B cell (primary cell): ENCODE measurements at regions of chr12 and their contacts with region 1.

Region 1: GRCh38 chr12:26298785-26299621 is 103.6 kb downstream of the SSPN start:
- DNase-seq: peak; percentile 75
- ATAC-seq: peak; percentile 96
- H3K4me3 ChIP-seq: peak overlapping the region in 4 of 5 experiments; percentile 30 to 42 (median 36)
- H3K4me3 Mint-ChIP-seq: peak overlapping the region; percentile 72
- H3K27ac ChIP-seq: peak overlapping the region; percentile 17 to 67
- H3K27ac Mint-ChIP-seq: peak overlapping the region; percentile 64
- H3K4me1 ChIP-seq: peaks cover 17 to 23% of the 10 kb centered on the region in 2 donors
- H3K4me1 Mint-ChIP-seq: peaks cover 26% of the 10 kb centered on the region
- H3K27me3 ChIP-seq: no peaks in the 10 kb centered on the region
- H3K27me3 Mint-ChIP-seq: no peaks in the 10 kb centered on the region
- CTCF ChIP-seq: no peak

Region 2: DNA sequence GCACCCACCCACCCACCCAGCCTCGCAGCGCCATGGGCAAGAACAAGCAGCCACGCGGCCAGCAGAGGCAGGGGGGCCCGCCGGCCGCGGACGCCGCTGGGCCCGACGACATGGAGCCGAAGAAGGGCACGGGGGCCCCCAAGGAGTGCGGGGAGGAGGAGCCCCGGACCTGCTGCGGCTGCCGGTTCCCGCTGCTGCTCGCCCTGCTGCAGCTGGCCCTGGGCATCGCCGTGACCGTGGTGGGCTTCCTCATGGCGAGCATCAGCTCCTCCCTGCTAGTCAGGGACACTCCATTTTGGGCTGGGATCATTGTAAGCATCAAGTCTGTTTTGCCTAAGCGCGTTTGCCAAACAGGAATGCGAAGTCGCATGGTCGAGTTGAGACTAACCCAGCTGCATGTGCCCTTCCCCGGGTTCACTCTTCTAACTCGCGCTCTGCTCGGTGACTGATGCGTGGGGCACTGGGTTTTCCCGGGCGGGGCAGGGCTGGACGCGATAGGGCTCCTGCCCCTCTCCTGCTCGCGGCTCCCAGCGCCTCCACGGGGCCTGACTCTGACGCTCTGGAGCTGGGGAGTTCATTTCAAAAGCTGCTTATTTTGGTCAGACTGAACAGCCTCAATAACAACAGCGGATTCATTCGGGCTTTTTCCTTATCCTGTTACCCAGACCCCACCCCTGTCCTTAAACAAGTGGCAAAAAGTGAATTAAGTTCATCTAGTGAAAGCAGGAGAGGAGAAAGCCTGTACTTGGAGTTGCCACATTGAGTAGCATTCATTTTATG is 103.2 kb before region 1 on chr12:
- CTCF ChIA-PET with region 1: interaction called, 3 read pairs
- POLR2A ChIA-PET with region 1: no interaction called
- intact Hi-C with region 1: loop called (anchors 10 kb)
- DNase-seq: peak; percentile 54
- ATAC-seq: peak; percentile 77
- H3K4me3 ChIP-seq: peak overlapping the region; percentile 44 to 74 (median 64)
- H3K4me3 Mint-ChIP-seq: peak overlapping the region; percentile 98
- H3K27ac ChIP-seq: peak overlapping the region in 1 of 2 donors; percentile 7
- H3K27ac Mint-ChIP-seq: peak overlapping the region; percentile 97
- H3K4me1 ChIP-seq: peaks cover 6 to 15% of the 10 kb centered on the region in 2 donors
- H3K4me1 Mint-ChIP-seq: peaks cover 16% of the 10 kb centered on the region
- H3K27me3 ChIP-seq: peaks cover 0 to 5% (median 0%) of the 10 kb centered on the region in 4 experiments
- H3K27me3 Mint-ChIP-seq: peaks cover 4% of the 10 kb centered on the region
- CTCF ChIP-seq: no peak

Region 3: DNA sequence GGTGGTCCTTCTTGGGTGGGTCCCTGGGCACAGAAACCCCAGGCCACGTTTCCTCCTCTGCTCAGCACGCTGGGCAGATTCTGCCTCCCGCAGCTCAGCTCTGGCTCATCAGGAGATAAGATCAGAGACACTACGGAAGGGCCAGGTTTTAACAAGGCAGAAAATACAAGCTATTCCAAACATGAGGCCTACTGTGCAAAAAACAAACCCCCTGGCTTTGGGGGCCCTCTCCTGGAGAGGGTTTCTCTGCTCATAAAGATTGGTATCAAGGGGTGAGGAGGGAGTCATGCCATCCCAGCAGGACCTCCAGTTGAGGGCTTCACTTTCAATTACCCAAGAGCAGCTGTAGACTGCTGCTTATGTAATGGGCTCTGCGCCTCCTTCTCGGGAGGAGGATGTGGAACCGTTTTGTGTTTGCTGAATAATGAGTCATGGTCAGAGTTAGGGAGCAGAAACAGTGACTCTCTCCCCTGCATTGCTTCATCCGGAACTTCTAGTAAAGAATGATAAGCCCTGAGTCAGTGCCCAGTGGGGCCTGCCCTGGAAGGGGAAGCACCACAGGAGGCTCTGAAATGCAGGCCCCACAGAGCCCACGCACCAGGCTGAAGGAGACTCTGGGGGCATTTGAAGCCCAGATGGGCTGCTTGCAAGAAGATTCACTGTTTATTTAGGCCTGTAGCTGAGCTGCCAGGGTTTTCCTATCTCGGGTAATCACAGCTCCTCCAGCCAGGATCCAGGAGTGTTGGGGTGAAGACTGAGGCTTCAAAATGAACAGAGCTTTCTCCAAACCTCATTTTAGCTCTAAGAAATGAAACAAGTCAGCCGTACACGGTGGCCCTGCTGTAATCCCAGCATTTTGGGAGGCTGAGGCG is 24.3 kb before region 1 on chr12:
- CTCF ChIA-PET with region 1: no interaction called
- POLR2A ChIA-PET with region 1: no interaction called
- intact Hi-C with region 1: loop called (anchors 1 kb)
- DNase-seq: peak; percentile 58
- ATAC-seq: peak; percentile 96
- H3K4me3 ChIP-seq: no peak overlapping the region
- H3K4me3 Mint-ChIP-seq: peak overlapping the region; percentile 18
- H3K27ac ChIP-seq: no peak overlapping the region
- H3K27ac Mint-ChIP-seq: peak overlapping the region; percentile 78
- H3K4me1 ChIP-seq: peaks cover 16 to 28% of the 10 kb centered on the region in 2 donors
- H3K4me1 Mint-ChIP-seq: peaks cover 43% of the 10 kb centered on the region
- H3K27me3 ChIP-seq: no peaks in the 10 kb centered on the region
- H3K27me3 Mint-ChIP-seq: no peaks in the 10 kb centered on the region
- CTCF ChIP-seq: no peak

Region 4: DNA sequence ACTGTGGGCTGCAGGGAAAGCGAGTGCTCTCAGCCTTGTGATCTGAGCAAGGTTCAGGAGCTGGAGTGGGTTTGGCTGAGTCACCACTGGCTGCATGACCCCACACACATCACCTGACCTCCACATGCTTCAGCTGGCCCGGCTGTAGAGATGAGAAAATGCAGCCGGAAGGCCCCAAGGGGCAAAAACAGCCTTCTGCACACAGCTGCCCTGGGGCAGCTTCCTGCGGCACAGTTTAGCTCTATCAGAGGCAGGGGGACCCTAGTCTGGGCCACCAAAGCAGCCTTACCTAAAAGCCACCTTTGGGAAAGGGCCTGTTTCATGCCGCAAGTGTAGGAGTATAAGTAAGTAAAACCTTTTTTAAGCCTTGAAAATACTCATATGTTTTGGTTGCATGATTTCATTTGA is 19.7 kb after region 1 on chr12:
- CTCF ChIA-PET with region 1: interaction called, 3 read pairs
- POLR2A ChIA-PET with region 1: interaction called, 5 read pairs
- intact Hi-C with region 1: loop called (anchors 2 kb)
- DNase-seq: peak; percentile 48
- ATAC-seq: peak; percentile 86
- H3K4me3 ChIP-seq: no peak overlapping the region
- H3K4me3 Mint-ChIP-seq: peak overlapping the region; percentile 71
- H3K27ac ChIP-seq: peak overlapping the region in 1 of 2 donors; percentile 14
- H3K27ac Mint-ChIP-seq: peak overlapping the region; percentile 88
- H3K4me1 ChIP-seq: peaks cover 20 to 30% of the 10 kb centered on the region in 2 donors
- H3K4me1 Mint-ChIP-seq: peaks cover 35% of the 10 kb centered on the region
- H3K27me3 ChIP-seq: no peaks in the 10 kb centered on the region
- H3K27me3 Mint-ChIP-seq: no peaks in the 10 kb centered on the region
- CTCF ChIP-seq: no peak

Region 5: DNA sequence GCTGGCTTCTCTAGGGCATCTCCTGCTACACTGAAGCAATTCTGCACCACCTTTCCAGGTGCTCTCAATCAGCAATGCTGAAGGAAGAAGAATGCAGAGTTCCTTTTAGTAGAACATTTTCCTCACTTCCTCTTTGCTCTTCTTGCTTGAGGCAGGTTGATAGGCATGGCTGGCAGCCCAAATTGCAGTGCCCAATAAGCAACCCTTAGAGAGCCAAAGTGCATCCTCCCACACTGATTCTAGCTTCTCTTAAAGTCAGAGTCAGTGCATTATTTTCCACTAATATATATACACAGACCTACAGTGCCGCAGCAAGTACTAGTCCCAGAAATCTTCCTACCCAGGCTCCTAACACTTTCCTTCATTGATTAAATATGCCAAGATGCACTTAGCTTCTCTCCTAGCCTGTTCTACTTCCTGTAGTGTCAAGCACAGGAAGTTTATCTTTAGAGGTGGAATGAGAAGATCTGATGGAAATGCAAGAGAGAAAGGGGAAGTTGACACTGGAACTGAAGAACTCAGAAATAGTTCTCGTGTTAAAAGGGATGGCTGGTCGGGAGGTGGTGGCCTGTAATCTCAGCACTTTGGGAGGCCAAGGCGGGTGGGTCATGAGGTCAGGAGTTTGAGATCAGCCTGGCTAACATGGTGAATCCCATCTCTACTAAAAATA is 29.1 kb after region 1 on chr12:
- CTCF ChIA-PET with region 1: no interaction called
- POLR2A ChIA-PET with region 1: no interaction called
- intact Hi-C with region 1: loop called (anchors 1 kb)
- DNase-seq: peak; percentile 71
- ATAC-seq: peak; percentile 89
- H3K4me3 ChIP-seq: no peak overlapping the region
- H3K4me3 Mint-ChIP-seq: peak overlapping the region; percentile 42
- H3K27ac ChIP-seq: peak overlapping the region; percentile 1 to 69
- H3K27ac Mint-ChIP-seq: peak overlapping the region; percentile 73
- H3K4me1 ChIP-seq: peaks cover 13 to 19% of the 10 kb centered on the region in 2 donors
- H3K4me1 Mint-ChIP-seq: peaks cover 24% of the 10 kb centered on the region
- H3K27me3 ChIP-seq: no peaks in the 10 kb centered on the region
- H3K27me3 Mint-ChIP-seq: no peaks in the 10 kb centered on the region
- CTCF ChIP-seq: no peak